Heart right ventricle (tissue), 16 donors: ENCODE measurements at regions of chr7 and their contacts with region 1.

Region 1: DNA sequence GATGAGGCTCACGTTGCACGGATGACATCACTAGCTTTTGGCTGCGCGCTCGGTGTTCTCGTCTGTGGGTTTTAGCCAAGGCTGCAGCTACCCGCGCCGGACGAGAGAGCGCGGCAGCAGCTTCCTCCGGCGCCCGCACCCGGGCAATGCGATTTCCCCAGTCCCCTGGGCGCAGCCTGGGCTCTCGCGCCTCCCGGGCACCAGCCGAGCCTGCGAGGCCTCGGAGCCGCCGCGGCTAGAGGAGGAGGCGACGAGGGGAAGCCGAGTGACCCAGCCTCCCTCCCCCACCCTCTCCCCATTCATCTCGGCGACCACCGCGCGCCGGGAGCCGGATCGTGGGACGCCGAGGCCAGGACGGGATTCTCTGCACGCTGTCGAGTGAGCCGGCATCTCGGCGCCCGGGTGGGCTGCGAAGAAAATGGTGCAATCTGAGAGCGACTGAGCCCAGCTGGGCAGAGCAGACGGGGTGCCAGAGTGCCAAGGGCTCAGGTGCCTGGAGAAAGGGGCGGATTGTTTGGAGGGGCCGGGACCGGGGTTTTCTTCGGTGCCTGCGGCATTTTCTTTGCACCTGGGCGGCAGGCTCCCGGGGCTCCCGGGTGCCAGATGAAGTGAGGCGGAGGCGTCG is 1.2 kb upstream of the TMEM178B start:
- DNase-seq: peak; percentile 51 to 71
- ATAC-seq: peak; percentile 57 to 86 (median 84)
- H3K4me3 ChIP-seq: peak overlapping the region; percentile 16 to 67 (median 60)
- H3K27ac ChIP-seq: peak overlapping the region in 4 of 10 donors; percentile 45 to 66 (median 60)
- H3K4me1 ChIP-seq: peaks cover 0 to 40% (median 33%) of the 10 kb centered on the region in 9 donors
- H3K27me3 ChIP-seq: peaks cover 0 to 87% (median 50%) of the 10 kb centered on the region in 7 donors
- CTCF ChIP-seq: no peak

Region 2: GRCh38 chr7:140397784-140398750 is 674.6 kb before region 1 on chr7 and contains the start of gene SLC37A3:
- intact Hi-C with region 1: no loop called
- DNase-seq: peak; percentile 86 to 87
- ATAC-seq: peak; percentile 96 to 99 (median 98)
- H3K4me3 ChIP-seq: peak within 1 kb of the TSS; percentile 82 to 99 (median 96)
- H3K27ac ChIP-seq: peak within 1 kb of the TSS; percentile 29 to 94 (median 88)
- H3K4me1 ChIP-seq: peaks cover 0 to 23% (median 16%) of the 10 kb centered on the region in 9 donors
- H3K27me3 ChIP-seq: peaks cover 0 to 32% (median 18%) of the 10 kb centered on the region in 7 donors
- CTCF ChIP-seq: peak in 5 of 9 donors; percentile 13 to 36 (median 20)
- total RNA-seq, gene SLC37A3: 5.2 to 14.1 (median 10.1) TPM

Region 3: GRCh38 chr7:141210862-141211261 is 138.2 kb after region 1 on chr7:
- intact Hi-C with region 1: loop called in 2 of 10 experiments (anchors 10 kb)
- DNase-seq: no peak
- ATAC-seq: no peak
- H3K4me3 ChIP-seq: no peak overlapping the region
- H3K27ac ChIP-seq: no peak overlapping the region
- H3K4me1 ChIP-seq: peaks cover 0 to 21% (median 10%) of the 10 kb centered on the region in 9 donors
- H3K27me3 ChIP-seq: no peaks in the 10 kb centered on the region
- CTCF ChIP-seq: no peak

Region 4: GRCh38 chr7:141231018-141231792 is 158.5 kb after region 1 on chr7:
- intact Hi-C with region 1: loop called in 3 of 10 experiments (anchors 5 to 10 kb)
- DNase-seq: peak; percentile 19 to 38
- ATAC-seq: peak in 7 of 8 donors; percentile 54 to 88 (median 78)
- H3K4me3 ChIP-seq: no peak overlapping the region
- H3K27ac ChIP-seq: no peak overlapping the region
- H3K4me1 ChIP-seq: peaks cover 0 to 4% (median 0%) of the 10 kb centered on the region in 9 donors
- H3K27me3 ChIP-seq: no peaks in the 10 kb centered on the region
- CTCF ChIP-seq: peak in 8 of 9 donors; percentile 32 to 64 (median 46)

Region 5: GRCh38 chr7:141533149-141533949 is 460.7 kb after region 1 on chr7:
- intact Hi-C with region 1: loop called in 2 of 10 experiments (anchors 10 kb)
- DNase-seq: peak; percentile 52 to 58
- ATAC-seq: peak; percentile 60 to 94 (median 83)
- H3K4me3 ChIP-seq: no peak overlapping the region
- H3K27ac ChIP-seq: peak overlapping the region in 4 of 10 donors; percentile 1 to 42 (median 21)
- H3K4me1 ChIP-seq: peaks cover 0 to 20% (median 0%) of the 10 kb centered on the region in 9 donors
- H3K27me3 ChIP-seq: peaks cover 0 to 11% (median 0%) of the 10 kb centered on the region in 7 donors
- CTCF ChIP-seq: peak; percentile 91 to 99 (median 95)